ENCODE measurements at regions of chr1 and their contacts with region 1.

Region 1: GRCh38 chr1:121519042-121519755 is 334.4 kb downstream of the SRGAP2C start:
- DNase-seq: peak; percentile 64 to 97 (median 81)

Region 2: GRCh38 chr1:120176092-120176855 is 1342.9 kb before region 1 on chr1 and contains the start of gene SEC22B:
- intact Hi-C with region 1: no loop called
- DNase-seq: peak; percentile 78 to 98 (median 87)

Region 3: GRCh38 chr1:121443001-121443540 is 76.1 kb before region 1 on chr1:
- intact Hi-C with region 1: loop called (anchors 10 kb)
- DNase-seq: no peak

Measured in posterior cingulate gyrus (tissue), 11 donors.